Endothelial cell of umbilical vein (primary cell): ENCODE measurements at regions of chr3 and their contacts with region 1.

Region 1: DNA sequence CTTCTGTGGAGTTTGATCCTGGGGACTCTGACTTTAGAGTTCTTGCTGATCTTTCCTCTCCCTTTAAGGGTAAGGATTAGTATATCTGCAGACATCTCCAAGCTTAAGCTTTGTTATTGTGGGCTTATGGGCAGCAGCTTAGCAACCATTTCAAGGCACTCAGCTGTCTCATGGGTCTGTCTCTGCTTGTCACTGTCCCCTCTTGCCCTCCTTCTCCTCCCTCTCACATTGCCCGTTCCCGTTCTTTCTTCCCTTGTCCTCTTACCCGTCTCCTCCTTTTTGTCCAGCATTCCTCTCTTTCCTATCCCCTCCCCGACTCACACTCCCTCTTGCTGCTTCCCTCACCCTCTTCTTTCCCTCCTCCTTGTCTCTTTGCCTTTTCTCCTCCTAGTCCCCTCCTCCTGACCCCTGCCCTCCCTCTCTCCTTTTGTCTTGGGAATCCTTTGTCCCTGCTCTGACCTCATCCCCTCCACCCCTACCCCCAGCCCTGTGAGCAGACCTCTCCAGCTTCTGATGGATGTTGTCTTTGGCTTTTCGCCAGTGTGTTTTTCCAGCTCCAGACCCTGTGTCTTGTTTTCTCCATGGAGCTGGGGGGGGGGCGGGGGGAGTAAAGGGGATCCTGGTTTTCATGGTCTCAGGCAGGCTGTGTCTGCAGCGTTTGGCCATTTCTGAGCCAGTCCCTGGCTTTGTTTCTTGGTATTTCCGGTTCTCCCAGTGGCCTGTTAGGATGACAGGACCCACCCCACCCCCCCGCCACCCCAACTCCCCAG is 47.9 kb upstream of the TRAK1 start:
- DNase-seq: peak; percentile 98
- H3K4me3 ChIP-seq: no peak overlapping the region
- H3K27ac ChIP-seq: peak overlapping the region; percentile 91
- H3K4me1 ChIP-seq: peaks cover 35% of the 10 kb centered on the region
- H3K27me3 ChIP-seq: no peaks in the 10 kb centered on the region
- CTCF ChIP-seq: no peak
- POLR2A ChIP-seq: peak; percentile 32

Region 2: DNA sequence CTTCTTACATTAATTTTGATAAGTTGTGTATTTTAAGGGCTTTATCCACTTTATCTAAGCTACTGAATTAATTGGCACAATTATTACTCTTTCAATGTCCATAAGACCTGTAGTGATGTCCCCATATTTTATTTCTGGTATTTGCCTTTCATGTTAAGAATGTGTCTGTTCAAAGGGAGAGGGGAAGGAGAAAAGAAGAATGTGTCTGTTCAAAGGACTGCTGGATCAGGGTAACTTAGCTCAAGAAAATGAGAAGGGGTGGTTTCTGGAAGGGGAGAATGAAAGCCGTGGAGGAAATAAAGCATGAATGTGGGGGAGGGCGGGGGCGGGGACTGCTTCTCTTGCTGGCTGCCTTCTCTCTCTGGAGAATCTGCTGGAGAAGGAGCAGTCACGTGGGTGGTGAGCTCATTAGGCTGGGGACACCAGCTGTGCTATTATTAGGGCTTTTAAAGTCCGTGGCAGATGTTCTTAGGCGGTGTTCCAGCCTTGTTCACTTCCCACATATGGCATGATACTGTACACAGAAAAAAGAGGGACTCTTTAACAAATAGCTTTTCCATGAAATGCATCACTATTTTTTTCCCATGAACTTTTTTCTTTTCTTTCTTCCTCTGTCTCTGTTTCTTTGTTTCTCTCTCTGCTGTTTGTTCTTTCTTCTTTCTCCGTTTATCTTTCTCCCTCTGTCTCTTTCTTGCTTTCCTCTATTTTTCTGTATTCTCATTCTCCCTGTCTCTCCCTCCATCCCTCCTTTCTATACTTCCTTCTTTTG is 17.7 kb before region 1 on chr3:
- CTCF ChIA-PET with region 1: interaction called, 22 read pairs
- POLR2A ChIA-PET with region 1: interaction called, 13 read pairs
- dilution Hi-C with region 1: no loop called
- intact Hi-C with region 1: loop called (anchors 1 kb)
- DNase-seq: peak; percentile 98
- H3K4me3 ChIP-seq: peak overlapping the region in 1 of 3 experiments; percentile 46
- H3K27ac ChIP-seq: peak overlapping the region; percentile 93
- H3K4me1 ChIP-seq: peaks cover 40% of the 10 kb centered on the region
- H3K27me3 ChIP-seq: no peaks in the 10 kb centered on the region
- CTCF ChIP-seq: no peak
- POLR2A ChIP-seq: peak; percentile 18

Region 3: DNA sequence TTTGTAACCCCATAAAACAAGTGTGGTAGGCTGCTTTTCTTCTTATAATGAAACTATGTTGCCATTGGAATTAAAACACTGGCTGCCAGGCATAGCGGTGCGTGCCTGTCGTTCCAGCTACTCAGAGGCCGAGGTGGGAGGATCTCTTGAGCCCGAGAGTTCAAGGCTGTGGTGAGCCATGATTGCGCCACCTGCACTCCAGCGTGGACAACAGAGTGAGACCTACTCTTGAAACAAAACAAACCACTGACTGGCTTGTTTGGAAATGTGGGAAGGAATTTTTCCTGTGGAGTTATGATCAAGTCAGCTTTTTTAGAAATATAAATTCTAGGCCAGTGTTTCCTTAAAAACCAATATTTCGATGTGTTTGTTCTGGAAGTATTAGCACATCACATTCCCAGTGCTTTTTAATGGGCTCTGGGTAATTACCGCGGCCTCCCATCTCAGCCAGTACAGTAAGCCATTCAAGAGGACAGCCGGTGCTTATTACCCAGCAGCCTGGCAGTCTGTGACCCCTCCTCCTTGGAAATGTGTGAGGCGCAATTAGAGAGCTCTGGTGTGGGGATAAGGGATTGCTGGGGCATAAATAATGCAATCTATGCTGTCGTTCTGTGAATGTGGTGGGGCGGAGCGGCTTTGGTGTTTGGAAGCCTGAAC is 10.4 kb before region 1 on chr3:
- CTCF ChIA-PET with region 1: interaction called, 3 read pairs
- POLR2A ChIA-PET with region 1: no interaction called
- dilution Hi-C with region 1: no loop called
- intact Hi-C with region 1: loop called (anchors 1 kb)
- DNase-seq: peak; percentile 66
- H3K4me3 ChIP-seq: no peak overlapping the region
- H3K27ac ChIP-seq: no peak overlapping the region
- H3K4me1 ChIP-seq: peaks cover 35% of the 10 kb centered on the region
- H3K27me3 ChIP-seq: no peaks in the 10 kb centered on the region
- CTCF ChIP-seq: no peak
- POLR2A ChIP-seq: no peak

Region 4: DNA sequence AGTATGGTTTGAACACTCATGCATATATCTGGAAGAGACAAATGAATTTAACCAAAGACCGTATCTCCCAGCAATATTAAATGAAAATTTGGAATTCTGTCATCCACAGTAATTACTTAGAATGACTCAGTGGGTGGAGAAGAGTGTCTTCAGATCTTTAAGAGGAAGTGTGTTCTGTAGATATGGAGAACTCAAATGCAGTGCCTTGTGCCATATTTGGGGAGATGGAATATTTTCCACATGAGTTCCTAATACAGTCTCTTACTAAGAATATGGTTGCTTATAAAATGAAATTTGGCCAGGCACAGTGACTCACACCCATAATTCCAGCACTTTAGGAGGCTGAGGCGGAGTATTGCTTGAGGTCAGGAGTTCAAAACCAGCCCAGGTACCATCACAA is 1538.1 kb after region 1 on chr3:
- CTCF ChIA-PET with region 1: no interaction called
- POLR2A ChIA-PET with region 1: no interaction called
- dilution Hi-C with region 1: no loop called
- intact Hi-C with region 1: no loop called
- DNase-seq: no peak
- H3K4me3 ChIP-seq: no peak overlapping the region
- H3K27ac ChIP-seq: no peak overlapping the region
- H3K4me1 ChIP-seq: peaks cover 20% of the 10 kb centered on the region
- H3K27me3 ChIP-seq: no peaks in the 10 kb centered on the region
- CTCF ChIP-seq: no peak
- POLR2A ChIP-seq: no peak